ENCODE measurements at regions of chr1 and their contacts with region 1.

Region 1: GRCh38 chr1:221203224-221204054 is 324.2 kb downstream of the HLX start:
- DNase-seq: peak; percentile 87
- ATAC-seq: peak; percentile 53

Region 2: GRCh38 chr1:220879076-220879508 is 324.3 kb before region 1 on chr1 and contains the start of gene HLX:
- intact Hi-C with region 1: loop called (anchors 2 kb)
- DNase-seq: peak; percentile 96
- ATAC-seq: peak; percentile 94
- total RNA-seq, gene HLX: 5.0 TPM

Region 3: GRCh38 chr1:221117548-221117951 is 85.9 kb before region 1 on chr1:
- intact Hi-C with region 1: loop called (anchors 2 kb)
- DNase-seq: no peak
- ATAC-seq: peak; percentile 93

Region 4: GRCh38 chr1:221137666-221138065 is 65.8 kb before region 1 on chr1:
- intact Hi-C with region 1: no loop called
- DNase-seq: no peak
- ATAC-seq: no peak

Region 5: DNA sequence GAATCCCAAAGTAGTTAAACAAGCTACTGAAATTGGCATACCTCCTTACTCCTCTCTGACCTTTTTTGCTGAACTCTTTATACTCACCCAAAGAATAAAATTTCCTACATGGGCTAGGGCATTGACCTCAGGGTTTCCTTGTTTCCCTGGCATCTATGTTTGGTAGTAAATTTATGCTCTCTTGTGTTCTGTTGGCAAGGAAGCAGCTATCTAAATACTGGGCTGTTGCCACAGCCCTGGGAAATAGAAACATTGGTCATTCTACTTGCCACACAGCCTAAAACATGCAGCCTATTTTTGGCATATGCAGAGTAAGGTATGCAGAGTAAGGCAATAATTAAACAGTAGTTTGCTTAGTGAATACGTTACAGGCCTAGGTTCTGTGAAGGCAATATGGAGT is 27.2 kb after region 1 on chr1:
- intact Hi-C with region 1: loop called (anchors 2 kb)
- DNase-seq: no peak
- ATAC-seq: peak; percentile 90

Region 6: GRCh38 chr1:221419513-221420088 is 216.2 kb after region 1 on chr1:
- intact Hi-C with region 1: no loop called
- DNase-seq: no peak
- ATAC-seq: no peak

Measured in Right ventricle myocardium inferior (tissue), 1 donor.